Left ventricle myocardium inferior (tissue), 1 donor: ENCODE measurements at regions of chr17 and their contacts with region 1.

Region 1: GRCh38 chr17:17694169-17695081 is 13.2 kb downstream of the RAI1 start:
- DNase-seq: peak; percentile 76
- H3K4me3 ChIP-seq: peak overlapping the region; percentile 73
- H3K27ac ChIP-seq: peak overlapping the region; percentile 96
- H3K4me1 ChIP-seq: peaks cover 91% of the 10 kb centered on the region
- H3K27me3 ChIP-seq: no peaks in the 10 kb centered on the region
- CTCF ChIP-seq: no peak

Region 2: DNA sequence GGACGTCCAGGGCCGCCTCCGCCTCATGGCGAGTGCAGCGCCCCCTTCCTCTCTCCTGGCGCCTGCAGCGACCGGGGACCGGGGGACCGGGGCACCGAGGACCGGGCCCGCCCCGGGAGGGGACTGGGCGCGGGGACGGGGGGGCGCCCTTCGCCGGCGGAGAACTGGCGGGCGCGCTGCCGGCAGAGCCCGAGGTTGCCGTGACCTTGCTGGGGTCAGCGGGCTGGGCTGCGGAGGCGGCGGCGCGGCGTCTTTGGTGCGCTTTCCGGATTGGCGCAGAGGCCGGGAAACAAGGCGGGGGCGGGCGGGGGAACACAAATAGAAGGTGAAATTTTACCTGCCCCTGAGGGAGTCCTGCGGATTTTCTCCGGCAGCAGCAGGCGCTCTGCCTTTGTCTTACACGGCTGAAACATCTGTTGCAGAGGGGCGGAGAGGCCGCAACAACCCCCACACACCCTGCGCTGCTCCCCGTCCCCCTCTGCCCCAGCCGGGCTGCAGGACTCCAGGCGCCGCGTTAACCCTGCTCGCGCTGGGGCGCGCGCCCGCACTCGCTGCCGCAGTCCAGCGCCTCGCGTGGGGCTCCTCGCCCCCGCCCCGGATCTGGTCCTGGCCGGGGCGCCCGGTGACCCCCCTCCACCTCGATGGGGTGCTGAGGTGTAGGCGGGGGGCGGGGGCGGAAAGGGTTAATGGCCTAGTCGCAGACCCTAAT is 88.8 kb after region 1 on chr17:
- intact Hi-C with region 1: loop called (anchors 10 kb)
- DNase-seq: peak; percentile 85
- H3K4me3 ChIP-seq: peak overlapping the region; percentile 72
- H3K27ac ChIP-seq: peak overlapping the region; percentile 95
- H3K4me1 ChIP-seq: peaks cover 92% of the 10 kb centered on the region
- H3K27me3 ChIP-seq: no peaks in the 10 kb centered on the region
- CTCF ChIP-seq: peak; percentile 45